Mammary epithelial cell (primary cell): ENCODE measurements at regions of chr9 and their contacts with region 1.

Region 1: DNA sequence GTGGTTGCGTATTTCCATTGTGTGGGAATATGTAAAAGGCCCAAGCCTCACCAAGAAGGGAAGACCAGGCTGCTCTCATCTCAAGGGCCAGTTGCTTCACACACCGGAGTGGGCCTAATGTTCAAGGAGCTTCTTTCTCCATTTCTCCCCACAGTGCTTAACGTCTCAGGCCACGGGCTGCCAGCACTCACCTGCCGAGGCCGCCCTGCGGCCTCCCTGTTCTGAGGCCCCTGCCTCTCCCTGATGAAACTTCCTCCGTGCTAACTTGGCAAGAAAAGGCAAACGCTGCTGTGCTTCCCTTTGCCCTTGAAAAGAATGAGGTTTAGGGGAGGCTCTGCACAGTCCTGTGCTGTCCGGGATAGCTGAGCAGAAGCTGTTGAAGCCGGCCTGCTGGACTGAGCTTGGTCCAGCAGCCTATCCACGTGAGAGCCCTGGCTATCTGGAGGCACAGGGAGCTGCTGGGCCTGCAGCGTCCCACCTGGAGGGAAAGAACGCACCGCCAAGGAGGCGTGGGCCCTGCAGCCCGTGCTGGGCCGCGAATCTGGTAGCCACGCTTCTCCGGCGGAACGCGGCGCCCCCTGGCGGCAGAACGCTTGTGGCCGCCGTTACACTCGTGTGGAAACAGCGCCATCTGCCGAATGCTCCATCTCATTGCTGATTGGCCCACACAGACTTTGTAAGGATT is 73.5 kb upstream of the PRSS3 start:
- DNase-seq: peak; percentile 65
- H3K4me3 ChIP-seq: no peak overlapping the region
- H3K27ac ChIP-seq: no peak overlapping the region
- H3K4me1 ChIP-seq: no peaks in the 10 kb centered on the region
- H3K27me3 ChIP-seq: no peaks in the 10 kb centered on the region
- CTCF ChIP-seq: peak; percentile 99 to 100

Region 2: DNA sequence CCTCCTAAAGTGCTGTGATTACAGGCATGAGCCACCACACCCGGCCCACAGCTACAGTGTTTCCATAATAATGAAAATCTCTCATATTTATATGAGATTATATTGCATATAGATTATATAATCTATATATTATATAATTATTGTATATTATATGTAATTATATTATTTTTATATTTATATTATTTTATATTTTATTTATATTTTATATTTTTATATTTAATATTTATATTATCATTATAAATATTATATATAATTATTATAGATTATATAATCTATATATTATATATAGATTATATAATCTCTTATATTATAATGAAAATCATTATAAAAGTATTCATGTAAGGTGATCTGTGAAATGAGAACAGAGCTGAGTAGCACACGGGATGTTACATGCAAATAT is 186.3 kb before region 1 on chr9:
- CTCF ChIA-PET with region 1: no interaction called
- dilution Hi-C with region 1: no loop called
- in situ Hi-C with region 1: no loop called
- intact Hi-C with region 1: no loop called
- DNase-seq: no peak
- H3K4me3 ChIP-seq: no peak overlapping the region
- H3K27ac ChIP-seq: no peak overlapping the region
- H3K4me1 ChIP-seq: no peaks in the 10 kb centered on the region
- H3K27me3 ChIP-seq: no peaks in the 10 kb centered on the region
- CTCF ChIP-seq: no peak

Region 3: GRCh38 chr9:33623658-33624586 is 97.9 kb before region 1 on chr9:
- CTCF ChIA-PET with region 1: interaction called, 13 read pairs
- dilution Hi-C with region 1: loop called (anchors 5 kb)
- in situ Hi-C with region 1: loop called (anchors 5 to 10 kb)
- intact Hi-C with region 1: loop called (anchors 1 kb)
- DNase-seq: peak; percentile 74
- H3K4me3 ChIP-seq: no peak overlapping the region
- H3K27ac ChIP-seq: no peak overlapping the region
- H3K4me1 ChIP-seq: peaks cover 29% of the 10 kb centered on the region
- H3K27me3 ChIP-seq: no peaks in the 10 kb centered on the region
- CTCF ChIP-seq: peak; percentile 77 to 84

Region 4: DNA sequence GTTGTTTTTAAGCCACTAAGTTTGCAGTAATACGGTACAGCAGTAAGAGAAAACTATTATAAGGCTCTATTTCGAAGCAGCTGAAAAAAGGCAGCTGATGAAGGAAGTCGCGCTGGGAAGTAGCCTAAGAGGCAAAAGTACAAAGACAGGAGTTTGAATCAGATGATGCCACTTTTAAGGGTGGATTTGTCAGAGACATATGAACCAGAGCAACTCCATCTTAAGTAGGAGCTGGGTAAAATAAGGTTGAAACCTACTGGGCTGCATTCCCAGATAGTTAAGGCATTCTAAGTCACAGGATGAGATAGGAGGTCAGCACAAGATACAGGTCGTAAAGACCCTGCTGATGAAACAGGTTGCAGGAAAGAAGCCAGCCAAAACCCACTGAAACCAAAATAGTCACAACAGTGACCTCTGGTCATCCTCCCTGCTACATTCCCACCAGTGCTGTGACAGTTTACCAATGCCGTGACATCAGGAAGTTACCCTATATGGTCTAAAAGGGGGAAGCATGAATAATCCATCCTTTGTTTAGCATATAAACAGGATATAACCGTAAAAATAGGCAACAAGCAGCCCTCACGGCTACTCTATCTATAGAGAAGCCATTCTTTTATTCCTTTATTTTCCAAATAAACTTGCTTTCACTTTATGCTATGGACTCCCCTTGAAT is 18.2 kb before region 1 on chr9:
- CTCF ChIA-PET with region 1: no interaction called
- dilution Hi-C with region 1: no loop called
- in situ Hi-C with region 1: no loop called
- intact Hi-C with region 1: no loop called
- DNase-seq: no peak
- H3K4me3 ChIP-seq: no peak overlapping the region
- H3K27ac ChIP-seq: no peak overlapping the region
- H3K4me1 ChIP-seq: no peaks in the 10 kb centered on the region
- H3K27me3 ChIP-seq: no peaks in the 10 kb centered on the region
- CTCF ChIP-seq: no peak

Region 5: GRCh38 chr9:33785913-33786312 is 64.1 kb after region 1 on chr9:
- CTCF ChIA-PET with region 1: no interaction called
- dilution Hi-C with region 1: no loop called
- in situ Hi-C with region 1: no loop called
- intact Hi-C with region 1: no loop called
- DNase-seq: no peak
- H3K4me3 ChIP-seq: no peak overlapping the region
- H3K27ac ChIP-seq: no peak overlapping the region
- H3K4me1 ChIP-seq: peaks cover 14% of the 10 kb centered on the region
- H3K27me3 ChIP-seq: no peaks in the 10 kb centered on the region
- CTCF ChIP-seq: no peak